Breast epithelium (tissue), 4 donors: ENCODE measurements at regions of chr1 and their contacts with region 1.

Region 1: GRCh38 chr1:89786628-89787214 is 34.1 kb upstream of the LRRC8D start:
- DNase-seq: no peak
- H3K4me3 ChIP-seq: no peak overlapping the region
- H3K27ac ChIP-seq: no peak overlapping the region
- H3K4me1 ChIP-seq: no peaks in the 10 kb centered on the region
- H3K27me3 ChIP-seq: no peaks in the 10 kb centered on the region
- CTCF ChIP-seq: no peak
- POLR2A ChIP-seq: no peak

Region 2: GRCh38 chr1:89035080-89035479 is 751.6 kb before region 1 on chr1:
- intact Hi-C with region 1: no loop called
- DNase-seq: no peak
- H3K4me3 ChIP-seq: no peak overlapping the region
- H3K27ac ChIP-seq: no peak overlapping the region
- H3K4me1 ChIP-seq: no peaks in the 10 kb centered on the region
- H3K27me3 ChIP-seq: no peaks in the 10 kb centered on the region
- CTCF ChIP-seq: no peak
- POLR2A ChIP-seq: no peak

Region 3: GRCh38 chr1:89771991-89772560 is 14.6 kb before region 1 on chr1:
- intact Hi-C with region 1: loop called (anchors 1 kb)
- DNase-seq: no peak
- H3K4me3 ChIP-seq: no peak overlapping the region
- H3K27ac ChIP-seq: no peak overlapping the region
- H3K4me1 ChIP-seq: no peaks in the 10 kb centered on the region
- H3K27me3 ChIP-seq: no peaks in the 10 kb centered on the region
- CTCF ChIP-seq: no peak
- POLR2A ChIP-seq: no peak